B cell (primary cell): ENCODE measurements at regions of chr7 and their contacts with region 1.

Region 1: DNA sequence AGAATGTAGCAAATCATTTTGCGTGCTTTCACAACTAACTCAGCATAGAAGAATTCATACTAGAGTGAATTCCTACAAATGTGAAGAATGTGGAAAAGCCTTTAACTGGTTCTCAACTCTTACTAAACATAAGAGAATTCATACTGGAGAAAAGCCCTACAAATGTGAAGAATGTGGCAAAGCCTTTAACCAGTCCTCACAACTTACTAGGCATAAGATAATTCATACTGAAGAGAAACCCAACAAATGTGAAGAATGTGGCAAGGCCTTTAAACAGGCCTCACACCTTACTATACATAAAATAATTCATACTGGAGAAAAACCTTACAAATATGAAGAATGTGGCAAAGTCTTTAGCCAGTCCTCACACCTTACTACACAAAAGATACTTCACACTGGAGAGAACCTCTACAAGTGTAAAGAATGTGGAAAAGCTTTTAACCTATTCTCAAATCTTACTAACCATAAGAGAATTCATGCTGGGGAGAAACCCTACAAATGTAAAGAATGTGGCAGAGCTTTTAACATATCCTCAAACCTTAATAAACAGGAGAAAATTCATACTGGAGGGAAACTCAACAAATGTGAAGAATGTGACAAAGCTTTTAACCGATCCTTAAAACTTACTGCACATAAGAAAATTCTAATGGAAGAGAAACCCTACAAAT is 40.8 kb downstream of the ZNF107 start:
- DNase-seq: no peak
- ATAC-seq: no peak
- H3K4me3 ChIP-seq: peak overlapping the region in 1 of 5 experiments; percentile 9
- H3K4me3 Mint-ChIP-seq: no peak overlapping the region
- H3K27ac ChIP-seq: no peak overlapping the region
- H3K27ac Mint-ChIP-seq: no peak overlapping the region
- H3K4me1 ChIP-seq: no peaks in the 10 kb centered on the region
- H3K4me1 Mint-ChIP-seq: no peaks in the 10 kb centered on the region
- H3K27me3 ChIP-seq: no peaks in the 10 kb centered on the region
- H3K27me3 Mint-ChIP-seq: no peaks in the 10 kb centered on the region
- CTCF ChIP-seq: no peak

Region 2: DNA sequence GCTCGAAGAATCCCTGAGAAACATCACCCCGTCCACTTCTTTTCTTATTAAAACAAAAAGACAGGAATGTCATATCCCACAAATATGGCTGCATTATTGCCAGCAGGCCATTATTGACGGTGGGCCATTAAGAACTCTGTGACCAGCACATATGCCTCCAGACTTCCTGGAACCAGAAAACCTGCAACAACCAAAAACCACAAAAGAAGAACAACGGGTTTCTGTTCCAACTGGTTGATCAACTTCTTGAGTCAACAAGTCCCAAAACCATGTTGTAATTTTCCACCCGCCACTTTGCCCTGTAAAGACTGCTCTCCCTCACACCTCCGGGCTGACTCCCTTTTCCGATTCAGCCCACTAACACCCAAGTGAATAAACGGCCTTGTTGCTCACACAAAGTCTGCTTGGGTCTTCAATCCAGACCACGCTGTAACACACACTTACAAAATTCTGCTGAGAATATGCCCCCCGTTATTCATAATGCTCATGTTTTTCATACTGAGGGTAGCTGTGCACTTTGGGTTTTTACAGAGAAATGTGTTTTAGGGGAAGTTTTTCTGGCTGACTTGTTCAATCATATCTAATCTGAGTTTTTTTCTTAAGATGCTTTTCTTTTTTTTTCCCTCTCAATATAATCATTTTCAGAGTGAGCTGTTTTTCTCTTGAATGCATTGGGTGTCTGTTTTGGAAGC is 20.1 kb before region 1 on chr7:
- CTCF ChIA-PET with region 1: interaction called, 3 read pairs
- POLR2A ChIA-PET with region 1: no interaction called
- intact Hi-C with region 1: loop called (anchors 2 kb)
- DNase-seq: peak; percentile 8
- ATAC-seq: peak; percentile 83
- H3K4me3 ChIP-seq: peak overlapping the region in 3 of 5 experiments; percentile 5 to 45 (median 13)
- H3K4me3 Mint-ChIP-seq: peak overlapping the region; percentile 85
- H3K27ac ChIP-seq: peak overlapping the region; percentile 85 to 88
- H3K27ac Mint-ChIP-seq: no peak overlapping the region
- H3K4me1 ChIP-seq: peaks cover 11 to 62% of the 10 kb centered on the region in 2 donors
- H3K4me1 Mint-ChIP-seq: peaks cover 69% of the 10 kb centered on the region
- H3K27me3 ChIP-seq: no peaks in the 10 kb centered on the region
- H3K27me3 Mint-ChIP-seq: no peaks in the 10 kb centered on the region
- CTCF ChIP-seq: no peak